Calu3 (cell line): ENCODE measurements at regions of chr13 and their contacts with region 1.

Region 1: GRCh38 chr13:45393941-45394570 is 24.1 kb downstream of the SLC25A30 start:
- DNase-seq: peak; percentile 57
- H3K4me3 Mint-ChIP-seq: no peak overlapping the region
- H3K27ac Mint-ChIP-seq: no peak overlapping the region
- H3K4me1 Mint-ChIP-seq: no peaks in the 10 kb centered on the region
- H3K27me3 Mint-ChIP-seq: no peaks in the 10 kb centered on the region
- CTCF ChIP-seq: peak; percentile 57

Region 2: GRCh38 chr13:45024847-45025246 is 369.2 kb before region 1 on chr13:
- CTCF ChIA-PET with region 1: no interaction called
- intact Hi-C with region 1: no loop called
- DNase-seq: no peak
- H3K4me3 Mint-ChIP-seq: no peak overlapping the region
- H3K27ac Mint-ChIP-seq: no peak overlapping the region
- H3K4me1 Mint-ChIP-seq: no peaks in the 10 kb centered on the region
- H3K27me3 Mint-ChIP-seq: no peaks in the 10 kb centered on the region
- CTCF ChIP-seq: no peak

Region 3: GRCh38 chr13:45292176-45292575 is 101.9 kb before region 1 on chr13:
- CTCF ChIA-PET with region 1: interaction called, 20 read pairs
- intact Hi-C with region 1: no loop called
- DNase-seq: peak; percentile 73
- H3K4me3 Mint-ChIP-seq: no peak overlapping the region
- H3K27ac Mint-ChIP-seq: peak overlapping the region; percentile 77
- H3K4me1 Mint-ChIP-seq: peaks cover 30% of the 10 kb centered on the region
- H3K27me3 Mint-ChIP-seq: no peaks in the 10 kb centered on the region
- CTCF ChIP-seq: no peak

Region 4: DNA sequence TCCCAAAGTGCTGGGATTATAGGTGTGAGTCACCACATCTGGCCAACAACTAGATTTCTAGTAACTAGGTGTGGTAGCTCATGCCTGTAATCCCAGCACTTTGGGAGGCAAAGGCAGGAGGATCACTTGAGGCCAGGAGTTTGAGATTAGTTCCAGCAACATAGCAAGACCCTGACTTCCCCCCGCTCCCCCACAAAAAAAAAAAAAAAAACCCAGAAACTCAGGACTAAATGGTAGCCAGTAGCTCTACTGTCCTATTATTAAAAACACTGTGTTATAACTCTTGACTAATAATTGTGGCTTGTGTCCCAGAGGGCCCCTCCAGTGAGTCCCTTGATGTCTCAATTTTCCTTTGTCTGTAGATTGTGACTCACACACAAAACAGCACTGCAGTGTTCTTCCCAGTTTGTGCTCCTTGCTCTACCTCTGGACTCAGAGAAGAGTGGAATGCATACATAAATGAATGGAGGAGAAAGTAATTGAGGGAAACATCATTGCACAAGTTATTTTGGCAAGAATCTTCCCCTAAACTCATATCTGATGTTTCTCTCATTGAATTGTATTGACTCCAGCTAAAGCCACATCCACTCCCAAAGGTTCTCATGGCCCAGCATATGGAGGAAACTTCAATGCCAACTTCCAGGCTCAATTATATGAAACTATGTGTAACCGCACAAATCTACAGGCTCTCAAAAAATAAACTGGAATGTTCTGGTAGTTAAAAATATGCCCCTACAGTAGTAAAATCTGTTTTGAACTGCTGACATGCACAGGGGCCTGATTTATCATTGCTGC is 61.8 kb before region 1 on chr13:
- CTCF ChIA-PET with region 1: interaction called, 4 read pairs
- intact Hi-C with region 1: loop called (anchors 5 kb)
- DNase-seq: peak; percentile 23
- H3K4me3 Mint-ChIP-seq: peak overlapping the region; percentile 24
- H3K27ac Mint-ChIP-seq: peak overlapping the region; percentile 52
- H3K4me1 Mint-ChIP-seq: peaks cover 71% of the 10 kb centered on the region
- H3K27me3 Mint-ChIP-seq: no peaks in the 10 kb centered on the region
- CTCF ChIP-seq: no peak

Region 5: GRCh38 chr13:45340422-45340925 is 53.6 kb before region 1 on chr13:
- CTCF ChIA-PET with region 1: interaction called, 12 read pairs
- intact Hi-C with region 1: no loop called
- DNase-seq: peak; percentile 91
- H3K4me3 Mint-ChIP-seq: peak overlapping the region; percentile 95
- H3K27ac Mint-ChIP-seq: peak overlapping the region; percentile 87
- H3K4me1 Mint-ChIP-seq: peaks cover 29% of the 10 kb centered on the region
- H3K27me3 Mint-ChIP-seq: no peaks in the 10 kb centered on the region
- CTCF ChIP-seq: no peak